ENCODE measurements at regions of chr12 and their contacts with region 1.

Region 1: GRCh38 chr12:110600254-110600653 is 13.7 kb upstream of the TCTN1 start:
- DNase-seq: no peak
- H3K4me3 ChIP-seq: no peak overlapping the region
- H3K27ac ChIP-seq: peak overlapping the region in 3 of 8 donors; percentile 19 to 59 (median 27)
- H3K4me1 ChIP-seq: peaks cover 0 to 55% (median 32%) of the 10 kb centered on the region in 6 donors
- H3K27me3 ChIP-seq: no peaks in the 10 kb centered on the region
- CTCF ChIP-seq: peak in 10 of 11 experiments; percentile 14 to 61 (median 47)
- POLR2A ChIP-seq: no peak

Region 2: DNA sequence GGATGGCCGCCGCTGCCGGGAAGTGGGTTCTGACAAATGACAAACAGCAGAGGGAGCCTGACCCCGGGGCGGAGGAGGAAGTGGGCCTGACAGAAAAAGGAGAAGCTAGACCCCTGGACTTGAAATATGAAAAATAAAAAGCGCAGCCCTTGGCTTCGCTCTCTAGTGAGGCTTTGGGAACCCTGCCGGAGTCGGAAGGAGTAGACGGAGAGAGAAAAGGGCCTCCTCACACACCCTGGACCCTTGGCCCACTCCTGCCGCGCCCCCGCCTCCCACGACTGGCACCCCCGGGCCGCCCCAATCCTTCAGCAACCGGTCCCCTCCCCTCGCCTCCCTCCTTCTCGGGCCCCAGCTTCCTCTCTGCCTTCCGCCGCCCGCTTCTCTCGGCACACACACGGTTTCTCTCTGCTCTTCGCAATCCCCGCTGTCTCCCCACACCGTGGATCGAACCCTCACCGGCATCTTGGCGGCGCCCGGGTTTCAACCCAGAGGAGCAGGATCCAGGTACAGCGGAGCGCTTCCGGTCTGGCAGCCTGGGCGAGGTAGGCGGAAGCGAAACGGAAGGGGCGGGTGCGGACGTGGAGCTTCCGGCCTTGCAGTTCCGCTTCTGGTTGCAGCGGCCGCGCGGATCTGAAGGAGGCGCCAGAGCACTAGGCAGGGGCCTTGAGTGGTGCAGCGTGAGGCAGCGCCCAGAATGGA is 150.3 kb before region 1 on chr12 and contains the start of gene ARPC3:
- intact Hi-C with region 1: loop called (anchors 5 kb)
- DNase-seq: peak; percentile 99
- H3K4me3 ChIP-seq: peak within 1 kb of the TSS; percentile 69 to 89 (median 78)
- H3K27ac ChIP-seq: peak within 1 kb of the TSS; percentile 94 to 98 (median 96)
- H3K4me1 ChIP-seq: peaks cover 27 to 76% (median 55%) of the 10 kb centered on the region in 6 donors
- H3K27me3 ChIP-seq: no peaks in the 10 kb centered on the region
- CTCF ChIP-seq: peak; percentile 82 to 99 (median 94)
- POLR2A ChIP-seq: peak; percentile 40 to 68 (median 60)
- total RNA-seq, gene ARPC3: 301 to 568 (median 353) TPM

Region 3: DNA sequence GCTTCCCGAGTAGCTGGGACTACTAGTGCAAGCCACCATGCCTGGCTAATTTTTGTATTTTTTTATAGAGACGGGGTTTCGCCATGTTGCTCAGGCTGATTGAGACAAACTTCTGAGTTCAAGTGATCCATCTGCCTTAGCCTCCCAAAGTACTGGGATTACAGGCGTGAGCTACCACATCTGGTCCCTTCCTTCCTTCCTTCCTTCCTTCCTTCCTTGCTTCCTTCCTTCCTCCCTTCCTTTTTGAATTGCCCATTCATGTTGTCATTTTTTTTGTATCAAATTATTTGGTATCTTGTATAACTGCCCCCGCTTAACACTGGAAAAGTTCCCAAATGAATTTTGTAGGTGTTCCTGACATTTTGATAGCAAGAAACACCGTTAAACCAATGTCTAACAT is 86.4 kb before region 1 on chr12:
- intact Hi-C with region 1: loop called (anchors 2 kb)
- DNase-seq: no peak
- H3K4me3 ChIP-seq: no peak overlapping the region
- H3K27ac ChIP-seq: no peak overlapping the region
- H3K4me1 ChIP-seq: peaks cover 0 to 8% (median 7%) of the 10 kb centered on the region in 6 donors
- H3K27me3 ChIP-seq: no peaks in the 10 kb centered on the region
- CTCF ChIP-seq: no peak
- POLR2A ChIP-seq: no peak

Region 4: DNA sequence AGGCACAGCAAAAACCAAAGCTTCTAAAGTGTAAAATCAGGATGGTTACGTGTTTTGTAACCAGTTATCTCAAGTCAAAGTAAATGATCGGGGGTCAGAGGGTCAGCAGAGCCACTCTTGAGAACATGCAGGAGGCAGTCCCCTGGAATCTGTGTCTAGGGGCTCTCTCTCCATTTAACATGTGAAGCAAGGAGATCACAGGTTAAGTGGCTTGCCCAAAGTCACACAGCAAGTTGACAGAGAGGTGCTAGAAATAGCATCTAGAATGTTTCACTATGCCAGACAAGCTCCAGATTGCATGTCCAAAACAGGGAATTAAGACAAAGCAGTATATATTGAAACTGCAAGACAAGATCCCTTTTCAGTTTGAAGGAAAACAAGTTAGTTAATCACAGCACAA is 50.5 kb before region 1 on chr12:
- intact Hi-C with region 1: loop called (anchors 5 kb)
- DNase-seq: no peak
- H3K4me3 ChIP-seq: no peak overlapping the region
- H3K27ac ChIP-seq: peak overlapping the region in 3 of 8 donors; percentile 6 to 42 (median 42)
- H3K4me1 ChIP-seq: peaks cover 4 to 95% (median 28%) of the 10 kb centered on the region in 6 donors
- H3K27me3 ChIP-seq: no peaks in the 10 kb centered on the region
- CTCF ChIP-seq: no peak
- POLR2A ChIP-seq: no peak

Measured in spleen (tissue), 13 donors.